ENCODE measurements at regions of chr6 and their contacts with region 1.

Region 1: GRCh38 chr6:227074-227782 is 65.1 kb upstream of the DUSP22 start:
- DNase-seq: peak; percentile 95
- ATAC-seq: peak; percentile 36
- H3K4me3 ChIP-seq: no peak overlapping the region
- H3K27ac ChIP-seq: peak overlapping the region; percentile 94
- H3K4me1 ChIP-seq: peaks cover 96% of the 10 kb centered on the region
- H3K27me3 ChIP-seq: no peaks in the 10 kb centered on the region
- CTCF ChIP-seq: peak; percentile 32 to 73 (median 60); a peak in 5 of 6 replicates
- EP300 ChIP-seq: peak in 1 of 2 experiments; percentile 75; a peak in 2 of 4 replicates
- POLR2A ChIP-seq: peak; percentile 50; the same call in 1 of the 2 replicates
- RAD21 ChIP-seq: peak; percentile 88

Region 2: DNA sequence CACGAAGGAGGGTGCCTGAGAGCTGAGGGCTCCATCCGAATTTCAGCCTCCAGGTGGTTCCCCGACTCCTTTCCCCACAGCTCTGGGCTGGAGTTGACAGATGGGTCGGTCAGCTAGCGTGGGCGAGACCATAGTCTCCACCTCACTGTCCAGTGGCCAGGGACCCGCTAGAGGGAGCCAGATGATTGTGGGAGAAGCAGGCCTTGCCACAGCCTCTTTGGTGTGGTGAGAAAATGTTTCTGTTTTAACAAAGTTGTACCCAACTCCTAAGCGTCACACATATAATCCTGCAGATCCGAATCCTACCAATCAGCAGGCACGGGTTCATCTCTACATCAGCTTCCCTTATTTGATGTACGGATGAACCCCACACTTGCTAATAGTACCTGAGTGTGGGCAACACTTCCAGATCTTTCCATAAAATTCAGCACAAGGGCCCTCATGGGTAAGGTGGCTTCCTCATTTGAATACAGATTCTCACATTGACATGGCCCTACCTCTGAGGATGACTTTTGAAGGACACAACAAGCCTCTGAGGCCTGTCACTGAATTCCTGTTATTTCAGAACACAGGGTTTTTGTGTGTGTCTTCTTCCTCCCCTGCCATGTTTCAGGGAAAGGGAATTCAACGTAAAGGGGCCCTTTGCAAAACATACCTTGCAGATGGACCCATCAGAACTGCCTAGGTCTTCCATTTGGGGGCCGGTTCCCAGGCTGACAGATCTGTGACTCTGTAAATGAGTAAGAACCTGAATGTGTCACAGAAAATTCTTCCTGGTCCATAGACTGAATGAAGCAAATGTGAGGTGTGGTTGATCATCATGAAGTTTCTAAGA is 38.2 kb before region 1 on chr6:
- CTCF ChIA-PET with region 1: interaction called, 460 read pairs
- POLR2A ChIA-PET with region 1: interaction called, 139 read pairs
- RAD21 ChIA-PET with region 1: interaction called, 519 read pairs
- SMC1A ChIA-PET with region 1: interaction called, 748 read pairs
- in situ Hi-C with region 1: no loop called
- intact Hi-C with region 1: loop called (anchors 1 kb)
- DNase-seq: peak; percentile 94
- ATAC-seq: peak; percentile 90
- H3K4me3 ChIP-seq: no peak overlapping the region
- H3K27ac ChIP-seq: peak overlapping the region; percentile 98
- H3K4me1 ChIP-seq: peaks cover 72% of the 10 kb centered on the region
- H3K27me3 ChIP-seq: no peaks in the 10 kb centered on the region; a peak in 1 of 4 replicates
- CTCF ChIP-seq: peak; percentile 93 to 96 (median 95)
- EP300 ChIP-seq: peak; percentile 44 to 58; a peak in 3 of 4 replicates
- POLR2A ChIP-seq: no peak
- RAD21 ChIP-seq: peak; percentile 97

Region 3: GRCh38 chr6:259901-260508 is 32.8 kb after region 1 on chr6:
- CTCF ChIA-PET with region 1: interaction called, 7 read pairs
- POLR2A ChIA-PET with region 1: interaction called, 4 read pairs
- RAD21 ChIA-PET with region 1: interaction called, 12 read pairs
- SMC1A ChIA-PET with region 1: interaction called, 13 read pairs
- in situ Hi-C with region 1: no loop called
- intact Hi-C with region 1: no loop called
- DNase-seq: peak; percentile 77
- ATAC-seq: peak; percentile 91
- H3K4me3 ChIP-seq: peak overlapping the region; percentile 20
- H3K27ac ChIP-seq: peak overlapping the region; percentile 82
- H3K4me1 ChIP-seq: peaks cover 37% of the 10 kb centered on the region
- H3K27me3 ChIP-seq: no peaks in the 10 kb centered on the region
- CTCF ChIP-seq: no peak
- EP300 ChIP-seq: no peak
- POLR2A ChIP-seq: no peak
- RAD21 ChIP-seq: no peak

Region 4: GRCh38 chr6:273551-274058 is 46.4 kb after region 1 on chr6:
- CTCF ChIA-PET with region 1: no interaction called
- POLR2A ChIA-PET with region 1: no interaction called
- RAD21 ChIA-PET with region 1: no interaction called
- SMC1A ChIA-PET with region 1: no interaction called
- in situ Hi-C with region 1: no loop called
- intact Hi-C with region 1: no loop called
- DNase-seq: no peak
- ATAC-seq: no peak
- H3K4me3 ChIP-seq: no peak overlapping the region
- H3K27ac ChIP-seq: no peak overlapping the region
- H3K4me1 ChIP-seq: peaks cover 19% of the 10 kb centered on the region
- H3K27me3 ChIP-seq: no peaks in the 10 kb centered on the region
- CTCF ChIP-seq: no peak
- EP300 ChIP-seq: no peak
- POLR2A ChIP-seq: no peak
- RAD21 ChIP-seq: no peak

Region 5: DNA sequence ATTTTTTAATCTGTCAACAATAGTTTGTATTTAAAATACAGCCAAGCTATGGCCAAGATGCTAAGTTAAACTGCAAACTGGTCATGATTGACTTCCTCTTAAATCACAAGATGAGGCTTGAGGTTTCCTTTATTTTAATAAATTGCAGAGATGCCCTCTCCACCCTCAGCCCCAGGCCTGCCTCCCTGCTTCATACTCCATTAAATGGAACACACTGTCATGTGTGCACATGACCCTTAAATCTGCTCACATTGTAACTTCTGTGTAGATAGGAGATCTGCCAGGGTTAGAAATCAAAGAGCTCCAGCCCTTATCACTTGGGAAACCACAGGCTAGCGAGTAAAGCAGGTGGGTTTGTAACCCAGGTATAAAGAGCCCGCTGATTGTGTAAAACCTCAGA is 85.9 kb after region 1 on chr6:
- CTCF ChIA-PET with region 1: interaction called, 7 read pairs
- POLR2A ChIA-PET with region 1: interaction called, 7 read pairs
- RAD21 ChIA-PET with region 1: interaction called, 131 read pairs
- SMC1A ChIA-PET with region 1: interaction called, 53 read pairs
- in situ Hi-C with region 1: no loop called
- intact Hi-C with region 1: loop called (anchors 1 kb)
- DNase-seq: no peak
- ATAC-seq: peak; percentile 1; the same call in 1 of the 3 replicates
- H3K4me3 ChIP-seq: no peak overlapping the region
- H3K27ac ChIP-seq: peak overlapping the region; percentile 65
- H3K4me1 ChIP-seq: peaks cover 93% of the 10 kb centered on the region
- H3K27me3 ChIP-seq: no peaks in the 10 kb centered on the region
- CTCF ChIP-seq: no peak
- EP300 ChIP-seq: no peak
- POLR2A ChIP-seq: no peak
- RAD21 ChIP-seq: no peak

Region 6: DNA sequence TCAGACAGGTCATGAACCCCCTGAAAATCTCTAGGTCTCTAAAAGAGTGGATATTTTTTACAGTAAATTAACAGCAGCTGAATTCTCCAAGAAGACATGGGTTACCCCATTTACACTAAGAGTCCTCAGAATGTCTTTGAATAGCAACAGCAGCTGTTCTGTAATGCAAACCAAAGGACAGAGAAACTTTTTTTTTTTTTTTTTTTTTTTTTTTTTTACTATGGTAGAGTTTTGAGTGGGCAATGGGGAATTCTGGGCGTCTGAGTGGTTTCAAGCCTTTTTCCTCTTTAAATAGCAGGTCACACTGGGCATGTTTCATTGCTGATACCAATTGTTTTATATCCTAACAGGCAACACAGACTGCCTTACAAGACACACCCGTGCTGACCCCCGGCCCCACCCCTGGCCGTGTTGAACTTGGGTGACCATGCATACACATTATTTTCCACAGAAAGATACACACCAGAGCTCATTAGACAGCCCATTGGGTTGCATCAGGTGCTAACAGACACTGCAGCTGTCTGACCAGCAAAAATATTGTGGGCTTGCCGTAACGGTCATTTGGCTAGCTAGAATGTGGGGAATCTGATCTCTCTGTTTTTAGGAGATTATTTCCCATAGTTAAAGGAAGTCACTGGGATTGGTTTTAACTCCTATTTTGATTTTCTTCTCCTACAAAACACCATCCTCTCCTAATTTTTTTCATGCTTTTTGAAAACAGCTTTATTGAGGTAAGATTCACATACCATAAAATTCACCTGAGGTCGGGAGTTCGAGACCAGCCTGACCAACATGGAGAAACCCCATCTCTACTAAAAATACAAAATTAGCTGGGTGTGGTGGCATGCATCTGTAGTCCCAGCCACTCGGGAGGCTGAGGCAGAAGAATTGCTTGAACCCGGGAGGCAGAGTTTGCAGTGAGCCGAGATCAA is 137.6 kb after region 1 on chr6:
- CTCF ChIA-PET with region 1: interaction called, 7 read pairs
- POLR2A ChIA-PET with region 1: no interaction called
- RAD21 ChIA-PET with region 1: interaction called, 19 read pairs
- SMC1A ChIA-PET with region 1: interaction called, 12 read pairs
- in situ Hi-C with region 1: no loop called
- intact Hi-C with region 1: no loop called
- DNase-seq: peak; percentile 78
- ATAC-seq: peak; percentile 94
- H3K4me3 ChIP-seq: no peak overlapping the region
- H3K27ac ChIP-seq: peak overlapping the region; percentile 33
- H3K4me1 ChIP-seq: peaks cover 25% of the 10 kb centered on the region
- H3K27me3 ChIP-seq: no peaks in the 10 kb centered on the region
- CTCF ChIP-seq: no peak
- EP300 ChIP-seq: peak; percentile 37 to 88; a peak in 2 of 4 replicates
- POLR2A ChIP-seq: no peak
- RAD21 ChIP-seq: 0 out of 2 replicates have a peak, but pooled peaks have one; percentile 2

Region 7: DNA sequence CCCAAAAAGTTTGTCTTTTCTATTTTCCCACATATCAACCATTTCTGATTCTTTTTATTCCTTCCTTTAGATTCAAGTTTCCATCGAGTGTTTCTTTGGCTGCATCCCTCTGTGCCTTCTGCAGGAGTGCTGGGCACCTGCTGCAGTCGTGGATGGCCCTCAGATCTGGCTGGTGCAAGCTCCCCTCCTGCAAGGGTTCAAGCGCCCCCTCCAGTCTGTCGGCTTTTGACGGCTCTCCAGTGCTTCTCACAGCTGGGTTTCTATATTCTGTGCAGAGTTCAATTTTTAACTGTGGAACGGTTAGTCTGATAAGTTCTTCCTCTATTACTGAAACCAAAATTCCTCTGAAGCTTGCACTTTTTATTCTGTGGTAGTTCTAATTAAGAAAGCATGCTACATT is 297.6 kb after region 1 on chr6:
- CTCF ChIA-PET with region 1: interaction called, 10 read pairs
- POLR2A ChIA-PET with region 1: no interaction called
- RAD21 ChIA-PET with region 1: interaction called, 4 read pairs
- SMC1A ChIA-PET with region 1: interaction called, 14 read pairs
- in situ Hi-C with region 1: no loop called
- intact Hi-C with region 1: no loop called
- DNase-seq: no peak
- ATAC-seq: peak; percentile 85
- H3K4me3 ChIP-seq: no peak overlapping the region
- H3K27ac ChIP-seq: no peak overlapping the region
- H3K4me1 ChIP-seq: no peaks in the 10 kb centered on the region
- H3K27me3 ChIP-seq: no peaks in the 10 kb centered on the region
- CTCF ChIP-seq: peak; percentile 14 to 39 (median 36); a peak in 4 of 6 replicates
- EP300 ChIP-seq: no peak
- POLR2A ChIP-seq: no peak
- RAD21 ChIP-seq: peak; percentile 51

Region 8: GRCh38 chr6:854406-855118 is 627.3 kb after region 1 on chr6:
- CTCF ChIA-PET with region 1: no interaction called
- POLR2A ChIA-PET with region 1: no interaction called
- RAD21 ChIA-PET with region 1: no interaction called
- SMC1A ChIA-PET with region 1: no interaction called
- in situ Hi-C with region 1: no loop called
- intact Hi-C with region 1: no loop called
- DNase-seq: no peak
- ATAC-seq: no peak
- H3K4me3 ChIP-seq: no peak overlapping the region
- H3K27ac ChIP-seq: no peak overlapping the region
- H3K4me1 ChIP-seq: no peaks in the 10 kb centered on the region; the same call in 1 of the 2 replicates
- H3K27me3 ChIP-seq: no peaks in the 10 kb centered on the region; a peak in 1 of 4 replicates
- CTCF ChIP-seq: no peak
- EP300 ChIP-seq: no peak
- POLR2A ChIP-seq: no peak
- RAD21 ChIP-seq: no peak

Region 9: GRCh38 chr6:1162367-1163275 is 935.4 kb after region 1 on chr6:
- CTCF ChIA-PET with region 1: no interaction called
- POLR2A ChIA-PET with region 1: no interaction called
- RAD21 ChIA-PET with region 1: no interaction called
- SMC1A ChIA-PET with region 1: no interaction called
- in situ Hi-C with region 1: no loop called
- intact Hi-C with region 1: no loop called
- DNase-seq: no peak
- ATAC-seq: no peak
- H3K4me3 ChIP-seq: no peak overlapping the region
- H3K27ac ChIP-seq: no peak overlapping the region
- H3K4me1 ChIP-seq: no peaks in the 10 kb centered on the region
- H3K27me3 ChIP-seq: no peaks in the 10 kb centered on the region; a peak in 1 of 4 replicates
- CTCF ChIP-seq: no peak
- EP300 ChIP-seq: no peak
- POLR2A ChIP-seq: no peak
- RAD21 ChIP-seq: no peak